ENCODE measurements at regions of chr11 and their contacts with region 1.

Region 1: GRCh38 chr11:61899146-61899841 is 7.9 kb upstream of the FADS3 start:
- DNase-seq: peak; percentile 62 to 84
- H3K4me3 ChIP-seq: no peak overlapping the region
- H3K27ac ChIP-seq: peak overlapping the region; percentile 73 to 88
- H3K4me1 ChIP-seq: peaks cover 0 to 4% of the 10 kb centered on the region in 2 donors
- H3K27me3 ChIP-seq: no peaks in the 10 kb centered on the region
- CTCF ChIP-seq: peak; percentile 99 to 100 (median 99)
- POLR2A ChIP-seq: no peak

Region 2: GRCh38 chr11:61923166-61924063 is 24.1 kb after region 1 on chr11:
- intact Hi-C with region 1: no loop called
- DNase-seq: peak in 1 of 2 donors; percentile 77
- H3K4me3 ChIP-seq: peak overlapping the region in 1 of 3 donors; percentile 25
- H3K27ac ChIP-seq: peak overlapping the region; percentile 86 to 98
- H3K4me1 ChIP-seq: peaks cover 11 to 20% of the 10 kb centered on the region in 2 donors
- H3K27me3 ChIP-seq: no peaks in the 10 kb centered on the region
- CTCF ChIP-seq: no peak
- POLR2A ChIP-seq: no peak

Region 3: GRCh38 chr11:61947486-61948210 is 48.4 kb after region 1 on chr11:
- intact Hi-C with region 1: loop called (anchors 2 kb)
- DNase-seq: peak; percentile 83 to 86
- H3K4me3 ChIP-seq: no peak overlapping the region
- H3K27ac ChIP-seq: peak overlapping the region in 1 of 2 donors; percentile 65
- H3K4me1 ChIP-seq: no peaks in the 10 kb centered on the region
- H3K27me3 ChIP-seq: no peaks in the 10 kb centered on the region
- CTCF ChIP-seq: peak; percentile 82 to 92 (median 87)
- POLR2A ChIP-seq: no peak